Sciatic nerve (tissue), 2 donors: ENCODE measurements at regions of chr1 and their contacts with region 1.

Region 1: GRCh38 chr1:110266834-110267233 is 56.7 kb downstream of the KCNC4 start:
- DNase-seq: no peak
- ATAC-seq: no peak

Region 2: GRCh38 chr1:109931189-109931731 is 335.6 kb before region 1 on chr1:
- intact Hi-C with region 1: loop called (anchors 5 kb)
- DNase-seq: peak; percentile 88
- ATAC-seq: peak; percentile 69

Region 3: DNA sequence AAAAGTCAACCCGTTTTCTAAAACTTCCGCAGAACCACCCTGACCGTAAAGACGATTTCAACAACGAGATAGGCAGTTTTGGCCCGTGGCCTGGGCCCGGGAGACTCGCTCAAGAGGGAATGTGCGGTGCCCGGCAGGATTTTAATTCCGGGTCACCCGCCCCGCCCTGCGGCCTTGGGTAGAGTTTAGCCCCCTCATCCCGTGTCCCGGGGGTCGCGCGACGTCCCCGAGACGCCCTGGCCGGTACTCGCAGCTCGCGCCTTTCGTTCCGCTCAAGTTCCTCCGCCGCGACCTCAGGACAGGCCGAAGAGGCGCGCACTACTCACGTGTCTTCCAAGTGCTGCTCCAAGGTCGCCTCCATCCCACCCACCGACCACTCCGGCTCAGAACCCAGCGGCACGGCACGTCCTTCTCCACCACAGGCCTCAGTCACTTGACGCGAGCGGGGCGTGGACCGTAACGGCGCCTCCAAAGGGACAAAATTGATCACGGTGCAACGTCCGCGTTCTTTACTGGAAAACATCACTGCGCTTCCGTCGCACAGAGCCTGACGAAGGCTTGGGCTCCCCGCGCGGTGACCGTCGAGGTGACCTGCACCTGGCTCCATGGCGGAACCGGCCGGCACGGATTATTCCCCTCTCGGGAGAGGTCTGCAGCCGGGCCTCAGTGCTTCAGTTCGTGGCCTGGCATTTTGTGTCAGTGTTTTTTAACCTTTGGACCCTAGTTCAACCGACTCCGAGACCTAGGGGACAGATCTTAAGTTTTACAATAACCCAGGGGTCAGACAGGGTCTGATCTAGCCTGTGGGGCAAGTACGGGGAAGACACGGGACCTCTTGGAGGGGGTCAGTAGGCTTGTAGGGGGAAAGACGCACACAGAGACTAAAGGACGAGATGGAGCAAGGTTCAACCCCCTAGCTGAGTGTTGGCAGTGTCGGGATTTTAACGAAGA is 140.7 kb after region 1 on chr1 and contains the start of gene LAMTOR5:
- intact Hi-C with region 1: no loop called
- DNase-seq: peak; percentile 96
- ATAC-seq: peak; percentile 99
- total RNA-seq, gene LAMTOR5: 91.4 TPM